ENCODE measurements at regions of chr11 and their contacts with region 1.

Region 1: GRCh38 chr11:9619753-9620365 is 44.0 kb upstream of the SWAP70 start:
- DNase-seq: no peak
- H3K4me3 ChIP-seq: no peak overlapping the region
- H3K4me1 ChIP-seq: peaks cover 6% of the 10 kb centered on the region
- H3K27me3 ChIP-seq: no peaks in the 10 kb centered on the region

Region 2: DNA sequence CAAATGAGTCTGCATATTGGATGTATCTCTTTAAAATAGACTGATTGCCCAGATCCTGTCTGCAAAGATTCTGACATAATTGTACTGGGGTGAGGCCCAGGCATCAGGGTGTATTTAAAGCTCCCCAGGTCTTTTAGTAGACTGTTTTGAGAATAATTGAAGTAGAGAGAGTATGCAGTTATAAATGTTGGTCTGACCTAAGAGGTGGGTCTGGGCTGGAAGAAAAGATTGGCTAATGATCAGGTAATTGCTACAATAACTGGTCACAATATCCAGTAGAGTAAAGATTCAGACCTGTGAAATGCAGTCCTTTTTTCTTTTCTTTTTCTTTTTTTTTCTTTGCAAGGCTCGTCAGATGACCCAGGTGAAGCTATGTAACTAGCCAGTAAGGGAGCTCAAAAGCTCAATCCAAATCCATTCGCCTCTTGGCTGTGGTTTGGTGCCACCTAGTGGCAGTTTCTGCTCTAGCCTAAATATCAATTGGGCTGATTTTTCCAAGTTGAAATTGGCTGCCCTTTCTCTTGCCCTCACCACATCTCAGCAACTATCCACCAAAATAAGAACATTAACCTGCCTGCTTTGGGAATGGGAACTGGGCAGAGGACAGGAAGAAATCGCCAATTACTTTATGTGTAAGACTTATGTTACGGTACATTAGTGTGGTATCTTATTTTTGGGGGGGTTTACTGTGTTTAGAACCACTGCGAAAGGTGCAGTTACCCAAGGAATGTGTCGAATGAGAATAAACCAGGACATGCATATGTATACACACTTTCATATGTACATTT is 113.2 kb before region 1 on chr11:
- in situ Hi-C with region 1: no loop called
- DNase-seq: peak; percentile 82 to 87
- H3K4me3 ChIP-seq: no peak overlapping the region
- H3K4me1 ChIP-seq: peaks cover 8% of the 10 kb centered on the region
- H3K27me3 ChIP-seq: no peaks in the 10 kb centered on the region

Region 3: GRCh38 chr11:10134975-10135481 is 515.2 kb after region 1 on chr11:
- in situ Hi-C with region 1: loop called (anchors 5 kb)
- DNase-seq: no peak
- H3K4me3 ChIP-seq: no peak overlapping the region
- H3K4me1 ChIP-seq: peaks cover 8% of the 10 kb centered on the region
- H3K27me3 ChIP-seq: no peaks in the 10 kb centered on the region

Measured in HAP-1 (cell line).